ENCODE measurements at regions of chr14 and their contacts with region 1.

Region 1: DNA sequence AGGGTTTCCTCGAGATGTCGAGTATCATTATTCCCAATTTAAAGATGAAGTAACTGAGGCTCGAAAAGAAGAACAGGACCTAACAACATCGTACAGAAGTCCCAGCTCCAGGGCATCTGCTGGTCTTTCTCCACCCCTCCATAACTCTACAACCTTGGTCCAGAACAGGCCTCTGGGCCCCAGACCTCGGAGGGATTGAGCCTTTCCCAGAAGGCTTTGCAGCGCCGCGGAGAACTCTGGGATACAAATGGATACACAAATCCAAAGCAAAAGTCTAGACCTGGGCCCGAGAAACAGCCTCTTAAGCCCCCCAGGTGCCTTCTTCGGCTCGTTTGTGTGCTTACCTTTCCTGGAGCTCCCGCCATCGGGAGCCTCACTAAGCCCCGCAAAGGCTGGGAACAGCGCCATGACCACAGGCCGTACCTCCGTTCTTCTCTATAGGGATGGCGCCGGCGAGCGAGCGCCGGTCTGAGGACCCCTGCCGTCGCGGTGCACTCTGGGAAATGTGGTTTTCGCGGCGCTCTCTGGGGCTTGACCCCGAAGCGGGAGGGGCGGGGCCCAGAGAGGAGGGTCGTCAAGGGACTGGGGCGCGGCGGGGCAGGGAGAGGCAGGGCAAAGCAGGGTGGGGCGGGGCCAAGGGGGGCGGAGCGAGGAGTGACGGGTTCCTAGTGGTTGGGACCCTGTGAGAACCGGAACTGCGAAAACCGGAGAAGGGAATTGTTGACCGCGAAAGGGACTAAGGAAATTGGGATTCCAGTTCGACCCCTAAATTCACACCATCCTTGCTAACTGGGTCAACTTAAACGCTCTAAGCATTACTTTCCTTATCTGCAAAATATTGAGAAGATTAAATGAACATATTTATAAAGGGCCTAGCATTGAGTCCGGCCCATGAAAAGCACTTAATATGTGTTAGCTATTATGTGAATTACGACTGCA is at the start of gene NRDE2:
- DNase-seq: peak; percentile 98
- H3K4me3 Mint-ChIP-seq: peak within 1 kb of the TSS; percentile 95
- H3K27ac Mint-ChIP-seq: peak within 1 kb of the TSS; percentile 93
- H3K4me1 Mint-ChIP-seq: peaks cover 18% of the 10 kb centered on the region
- H3K27me3 Mint-ChIP-seq: peaks cover 25% of the 10 kb centered on the region
- total RNA-seq, gene NRDE2: 22.1 and 22.8 TPM in 2 replicates

Region 2: DNA sequence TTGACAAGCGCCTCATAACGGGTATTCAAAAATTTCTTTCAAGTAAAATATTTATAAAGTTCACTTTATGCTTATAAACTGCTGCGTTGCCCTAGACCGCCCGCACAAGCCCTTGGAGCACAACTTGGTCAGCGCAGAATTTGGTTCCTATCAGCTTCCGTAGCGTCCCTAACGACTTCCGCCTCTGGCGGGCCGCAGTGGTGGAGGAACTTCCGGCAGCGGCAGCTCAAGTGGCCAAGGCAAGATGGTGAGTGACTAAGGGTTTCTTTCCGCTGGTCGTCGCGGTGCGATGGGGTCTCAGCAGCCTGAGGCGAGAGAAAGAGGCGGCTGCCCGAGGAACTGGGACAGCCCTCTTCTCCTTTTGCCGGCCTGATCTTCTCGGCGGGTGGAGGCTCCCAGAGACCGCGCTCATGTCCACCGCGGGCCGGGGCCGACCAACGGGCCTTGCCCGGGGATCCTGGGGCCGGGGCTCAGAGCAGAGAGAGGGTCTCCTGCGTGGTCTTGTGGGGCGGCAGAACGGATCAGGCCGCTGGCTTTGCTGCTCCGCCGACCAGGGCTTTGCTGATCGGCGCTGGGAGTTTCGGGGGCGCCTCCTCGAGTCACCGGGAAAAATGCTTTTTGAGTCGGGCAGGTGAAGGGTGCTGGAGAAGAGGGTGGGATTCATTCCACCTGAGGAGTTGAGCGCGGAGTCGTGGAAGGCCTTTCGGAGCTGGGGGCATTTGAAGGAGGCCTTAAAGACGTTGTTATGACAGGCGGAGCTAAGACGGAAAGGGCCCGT is 75.2 kb before region 1 on chr14 and contains the start of gene PSMC1:
- intact Hi-C with region 1: loop called (anchors 1 kb)
- DNase-seq: peak; percentile 96
- H3K4me3 Mint-ChIP-seq: peak within 1 kb of the TSS; percentile 93
- H3K27ac Mint-ChIP-seq: peak within 1 kb of the TSS; percentile 96
- H3K4me1 Mint-ChIP-seq: peaks cover 27% of the 10 kb centered on the region
- H3K27me3 Mint-ChIP-seq: peaks cover 4% of the 10 kb centered on the region
- total RNA-seq, gene PSMC1: 170 and 185 TPM in 2 replicates

Region 3: DNA sequence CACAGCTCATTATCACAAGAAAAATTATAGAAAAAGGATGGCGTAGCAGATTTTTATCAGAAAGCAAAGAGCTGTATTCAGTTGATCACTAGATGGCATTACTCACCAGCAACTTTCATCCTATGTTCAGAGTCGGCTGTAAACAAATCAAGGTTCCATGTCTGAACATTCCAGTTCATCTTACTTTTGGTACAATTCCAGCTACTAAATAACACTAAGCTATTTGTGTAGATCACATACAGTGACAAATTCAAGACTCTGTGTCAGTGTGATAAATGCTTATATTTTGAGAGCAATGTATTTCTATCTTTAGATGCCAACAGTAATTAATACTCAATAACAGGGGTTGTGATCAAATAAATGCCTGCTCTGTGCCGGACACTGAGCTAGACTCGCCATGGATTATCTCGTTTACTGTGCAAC is 30.1 kb before region 1 on chr14:
- intact Hi-C with region 1: no loop called
- DNase-seq: no peak
- H3K4me3 Mint-ChIP-seq: no peak overlapping the region
- H3K27ac Mint-ChIP-seq: peak overlapping the region; percentile 6
- H3K4me1 Mint-ChIP-seq: peaks cover 12% of the 10 kb centered on the region
- H3K27me3 Mint-ChIP-seq: no peaks in the 10 kb centered on the region

Region 4: DNA sequence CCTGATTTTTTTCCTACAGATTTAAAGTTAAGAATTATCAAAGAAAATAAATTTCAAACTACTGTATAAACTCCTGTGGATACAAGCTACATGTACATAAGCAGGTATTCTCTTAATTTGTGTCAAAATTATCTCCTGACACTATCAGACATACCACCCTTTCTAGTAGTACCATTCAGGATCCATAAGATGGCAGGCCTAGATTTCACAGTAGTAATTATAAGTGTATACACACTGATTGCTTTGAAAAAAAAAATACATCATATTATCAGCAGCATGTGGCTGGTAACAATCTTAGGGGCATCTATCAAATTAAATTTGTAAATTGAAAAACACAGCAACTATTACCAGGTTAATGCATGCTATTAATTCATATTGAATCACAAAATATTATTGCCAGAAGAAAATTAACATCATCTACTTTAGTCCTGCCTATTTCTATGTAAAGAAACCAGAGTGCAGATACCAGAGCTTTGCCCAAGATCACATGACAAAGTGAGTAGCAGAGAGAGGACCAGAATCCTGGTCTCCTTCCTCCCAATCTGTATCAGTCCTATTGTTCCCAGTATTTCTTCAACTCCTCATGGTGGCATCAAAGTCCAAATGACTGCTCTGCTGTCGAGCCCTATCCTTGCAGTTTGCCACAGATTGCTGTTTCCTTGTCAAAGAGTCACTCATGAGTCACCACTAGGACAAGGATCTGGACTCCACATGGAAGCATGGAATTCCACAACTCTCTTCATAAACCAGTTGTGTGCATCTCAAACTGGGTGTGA is 37.4 kb after region 1 on chr14:
- intact Hi-C with region 1: no loop called
- DNase-seq: no peak
- H3K4me3 Mint-ChIP-seq: no peak overlapping the region
- H3K27ac Mint-ChIP-seq: no peak overlapping the region
- H3K4me1 Mint-ChIP-seq: no peaks in the 10 kb centered on the region
- H3K27me3 Mint-ChIP-seq: peaks cover 16% of the 10 kb centered on the region

Region 5: GRCh38 chr14:90383075-90383730 is 51.4 kb after region 1 on chr14:
- intact Hi-C with region 1: loop called (anchors 1 kb)
- DNase-seq: peak; percentile 99
- H3K4me3 Mint-ChIP-seq: no peak overlapping the region
- H3K27ac Mint-ChIP-seq: no peak overlapping the region
- H3K4me1 Mint-ChIP-seq: peaks cover 6% of the 10 kb centered on the region
- H3K27me3 Mint-ChIP-seq: no peaks in the 10 kb centered on the region

Region 6: DNA sequence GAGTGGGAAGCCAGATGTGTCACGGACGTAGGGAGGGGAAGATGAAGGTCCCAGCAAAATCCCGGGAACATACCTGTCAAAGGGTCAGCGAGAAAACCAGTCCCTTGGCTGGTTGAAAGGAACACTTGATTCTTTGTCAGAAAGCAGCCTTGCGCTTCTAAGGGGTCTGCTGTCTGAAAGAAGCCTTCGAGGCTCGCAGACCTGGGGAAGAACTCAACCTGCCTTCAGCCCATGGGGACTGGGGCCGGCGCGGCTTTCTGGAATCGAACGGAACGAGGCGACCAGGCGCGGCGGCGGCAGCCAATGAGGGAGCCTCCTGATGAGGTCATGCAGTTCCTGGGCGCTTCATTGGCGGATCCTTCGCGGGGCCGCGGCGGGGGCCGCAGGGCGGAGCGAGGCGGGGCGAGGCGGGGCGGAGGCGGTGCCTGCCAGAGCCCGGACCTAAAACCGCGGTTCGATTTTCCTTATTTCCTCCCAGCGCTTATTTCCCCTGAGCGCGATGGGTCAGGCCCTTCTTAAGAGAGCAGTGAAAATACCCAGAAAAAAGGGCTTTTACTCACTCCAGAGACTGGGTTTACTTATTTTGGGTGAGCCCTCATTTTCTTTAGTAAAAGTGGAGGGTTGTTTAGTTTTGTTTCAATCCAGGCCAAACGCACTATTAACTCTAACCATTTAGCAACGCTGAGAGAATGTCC is 496.3 kb after region 1 on chr14:
- intact Hi-C with region 1: loop called (anchors 10 kb)
- DNase-seq: peak; percentile 98
- H3K4me3 Mint-ChIP-seq: peak overlapping the region; percentile 80
- H3K27ac Mint-ChIP-seq: peak overlapping the region; percentile 93
- H3K4me1 Mint-ChIP-seq: peaks cover 22% of the 10 kb centered on the region
- H3K27me3 Mint-ChIP-seq: no peaks in the 10 kb centered on the region